GM12878 (cell line): ENCODE measurements at regions of chr17 and their contacts with region 1.

Region 1: GRCh38 chr17:82913295-82914042 is 73.6 kb upstream of the ZNF750 start:
- DNase-seq: no peak
- ATAC-seq: no peak
- H3K4me3 ChIP-seq: no peak overlapping the region
- H3K27ac ChIP-seq: no peak overlapping the region
- H3K4me1 ChIP-seq: peaks cover 28% of the 10 kb centered on the region
- H3K27me3 ChIP-seq: no peaks in the 10 kb centered on the region
- CTCF ChIP-seq: no peak; a peak in 1 of 6 replicates
- EP300 ChIP-seq: no peak
- POLR2A ChIP-seq: no peak
- RAD21 ChIP-seq: peak; percentile 44; the same call in 1 of the 2 replicates

Region 2: DNA sequence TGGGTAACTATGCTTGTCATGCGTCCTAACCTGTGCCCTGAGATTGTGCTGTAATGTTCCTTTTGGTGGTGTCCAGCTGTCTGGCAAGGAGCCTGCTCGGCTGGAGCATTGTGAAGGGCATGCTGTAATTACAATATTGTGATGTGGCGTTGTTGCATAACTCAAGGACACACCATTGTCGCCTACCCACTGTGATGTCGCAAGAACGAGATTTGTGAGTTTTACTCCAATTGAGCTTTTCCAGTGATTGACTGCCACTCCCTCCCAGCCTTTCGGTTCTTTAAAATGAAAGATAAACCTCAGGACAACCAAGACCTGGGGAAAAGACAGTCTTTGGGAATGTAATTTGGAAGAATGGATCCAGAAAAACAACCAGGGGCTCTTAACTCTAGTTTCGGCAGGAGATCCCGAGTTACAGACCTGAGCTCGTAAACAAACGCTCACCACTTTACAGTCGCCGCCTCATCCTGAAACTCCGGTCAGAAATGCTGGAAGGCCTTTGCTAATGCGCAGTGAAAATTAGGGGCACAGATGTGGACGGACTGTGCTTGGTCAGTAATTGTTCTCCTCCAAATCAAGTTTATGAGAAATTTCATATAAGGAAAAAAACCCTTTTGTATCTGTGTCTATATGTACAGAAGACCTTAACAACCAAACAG is 74.9 kb before region 1 on chr17:
- CTCF ChIA-PET with region 1: no interaction called
- POLR2A ChIA-PET with region 1: no interaction called
- RAD21 ChIA-PET with region 1: no interaction called
- SMC1A ChIA-PET with region 1: no interaction called
- in situ Hi-C with region 1: no loop called
- intact Hi-C with region 1: no loop called
- DNase-seq: no peak
- ATAC-seq: no peak
- H3K4me3 ChIP-seq: no peak overlapping the region
- H3K27ac ChIP-seq: no peak overlapping the region
- H3K4me1 ChIP-seq: no peaks in the 10 kb centered on the region
- H3K27me3 ChIP-seq: no peaks in the 10 kb centered on the region
- CTCF ChIP-seq: no peak
- EP300 ChIP-seq: no peak
- POLR2A ChIP-seq: no peak
- RAD21 ChIP-seq: no peak

Region 3: GRCh38 chr17:83200202-83200699 is 286.8 kb after region 1 on chr17:
- CTCF ChIA-PET with region 1: interaction called, 12 read pairs
- POLR2A ChIA-PET with region 1: no interaction called
- RAD21 ChIA-PET with region 1: no interaction called
- SMC1A ChIA-PET with region 1: no interaction called
- in situ Hi-C with region 1: no loop called
- intact Hi-C with region 1: no loop called
- DNase-seq: no peak
- ATAC-seq: peak; percentile 54
- H3K4me3 ChIP-seq: no peak overlapping the region
- H3K27ac ChIP-seq: no peak overlapping the region
- H3K4me1 ChIP-seq: peaks cover 22% of the 10 kb centered on the region
- H3K27me3 ChIP-seq: no peaks in the 10 kb centered on the region; a peak in 1 of 4 replicates
- CTCF ChIP-seq: no peak
- EP300 ChIP-seq: no peak
- POLR2A ChIP-seq: no peak
- RAD21 ChIP-seq: no peak